ENCODE measurements at regions of chr15 and their contacts with region 1.

Region 1: GRCh38 chr15:94670438-94671034 is 439.2 kb downstream of the MCTP2 start:
- DNase-seq: no peak
- H3K4me3 ChIP-seq: no peak overlapping the region
- H3K27ac ChIP-seq: peak overlapping the region in 3 of 59 donors; percentile 14 to 46 (median 33)
- H3K27me3 ChIP-seq: peaks cover 0 to 65% (median 15%) of the 10 kb centered on the region in 45 donors
- CTCF ChIP-seq: peak; percentile 57 to 96 (median 78)

Region 2: DNA sequence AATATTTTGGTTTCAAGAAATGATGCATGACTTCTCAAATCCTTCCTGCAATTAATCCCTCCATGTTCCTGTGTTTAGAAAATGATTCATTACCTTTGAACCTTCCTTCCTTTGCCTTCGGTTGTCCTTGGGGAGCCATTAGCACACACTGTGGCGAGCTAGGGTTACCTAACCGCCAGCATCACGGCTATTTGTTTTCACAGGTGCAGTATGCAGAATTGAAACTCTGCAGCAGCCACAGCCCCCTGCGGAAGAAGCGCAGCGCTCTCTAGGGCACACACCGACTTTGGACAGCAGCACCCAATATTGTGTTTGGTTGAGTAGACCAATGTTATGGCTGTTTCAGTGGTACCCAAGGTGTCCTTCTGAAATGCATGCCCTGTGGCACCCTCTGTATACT is 191.8 kb before region 1 on chr15:
- intact Hi-C with region 1: no loop called
- DNase-seq: no peak
- H3K4me3 ChIP-seq: no peak overlapping the region
- H3K27ac ChIP-seq: no peak overlapping the region
- H3K27me3 ChIP-seq: peaks cover 0 to 71% (median 28%) of the 10 kb centered on the region in 45 donors
- CTCF ChIP-seq: no peak

Region 3: DNA sequence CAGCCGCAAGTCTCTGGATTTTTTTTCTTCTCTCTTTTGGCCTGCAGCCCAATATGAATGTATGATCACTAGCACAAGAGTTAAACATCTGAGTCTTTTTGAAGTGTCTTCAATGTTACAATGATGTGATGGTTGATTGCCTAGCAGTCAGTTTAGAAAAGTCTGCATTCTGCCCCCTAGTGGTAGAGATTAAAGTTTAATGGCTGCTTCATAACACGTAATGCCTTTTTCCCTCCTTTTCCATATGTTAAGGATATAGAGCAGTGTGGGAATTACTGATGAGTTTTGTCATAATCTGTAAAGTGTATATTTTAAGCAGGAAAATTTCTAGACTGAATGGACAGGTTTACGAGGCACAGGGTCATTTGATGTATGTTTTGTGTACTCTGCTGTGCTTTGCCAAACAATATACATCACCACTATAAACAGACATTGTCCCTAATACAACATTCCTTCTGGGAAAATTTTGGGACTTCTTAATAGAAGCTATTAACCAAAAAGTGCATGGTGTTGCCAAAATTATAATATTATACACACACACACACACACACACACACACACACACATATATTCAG is 621.4 kb after region 1 on chr15:
- intact Hi-C with region 1: loop called in 1 of 2 experiments (anchors 5 kb)
- DNase-seq: no peak
- H3K4me3 ChIP-seq: no peak overlapping the region
- H3K27ac ChIP-seq: no peak overlapping the region
- H3K27me3 ChIP-seq: peaks cover 0 to 61% (median 10%) of the 10 kb centered on the region in 45 donors
- CTCF ChIP-seq: peak; percentile 45 to 87 (median 68)

Region 4: GRCh38 chr15:96345560-96346399 is 1675.2 kb after region 1 on chr15:
- intact Hi-C with region 1: loop called (anchors 5 to 10 kb)
- DNase-seq: peak in 4 of 10 donors; percentile 21 to 54 (median 42)
- H3K4me3 ChIP-seq: peak overlapping the region in 58 of 59 donors; percentile 6 to 70 (median 44)
- H3K27ac ChIP-seq: peak overlapping the region in 46 of 59 donors; percentile 5 to 94 (median 78)
- H3K27me3 ChIP-seq: peaks cover 5 to 100% (median 97%) of the 10 kb centered on the region in 45 donors
- CTCF ChIP-seq: peak; percentile 22 to 81 (median 66)